Activated B cell treated with CpG ODN at 0.5 μM for 24 hours (primary cell): ENCODE measurements at regions of chr21 and their contacts with region 1.

Region 1: DNA sequence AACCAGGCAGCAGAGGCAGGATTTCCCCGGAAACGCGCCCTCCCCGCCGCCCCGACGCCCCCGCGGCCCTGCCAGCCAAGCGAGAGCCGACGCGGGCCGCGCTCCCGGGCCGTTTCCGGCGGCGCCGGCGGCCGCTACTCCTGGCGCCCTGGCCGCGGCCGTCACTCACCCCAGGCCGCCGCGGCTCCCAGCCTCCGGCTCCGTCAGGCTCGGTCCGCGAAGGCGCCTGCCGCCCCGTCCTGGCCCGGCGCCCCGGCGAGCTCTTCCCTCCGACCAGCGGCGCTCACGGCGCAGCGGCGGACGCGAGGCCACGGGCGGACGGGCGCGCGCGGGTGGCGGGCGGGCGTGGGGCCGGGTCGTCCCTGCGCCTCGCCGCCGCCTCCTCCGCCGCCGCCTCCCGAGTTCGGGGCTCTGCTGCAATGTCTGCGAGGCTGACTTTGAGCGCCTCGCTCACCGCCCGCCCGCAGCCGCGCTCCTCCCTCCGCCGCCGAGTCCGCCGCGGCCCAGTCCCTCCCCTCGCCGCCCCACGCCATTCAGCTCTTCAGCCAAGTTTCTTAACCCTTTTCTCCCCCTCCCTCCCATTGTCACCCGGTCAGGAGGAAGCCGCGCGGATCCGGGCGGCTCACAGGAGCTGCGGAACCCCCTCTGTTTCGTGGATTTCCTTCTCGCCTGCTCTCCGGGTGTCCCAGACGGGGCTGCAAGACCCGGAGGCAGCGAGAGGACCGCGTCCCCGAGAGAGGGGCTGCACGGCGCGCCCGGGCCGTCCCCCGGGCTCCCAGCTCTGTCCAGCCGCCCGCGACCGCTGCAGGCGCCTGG is at the start of gene NRIP1:
- DNase-seq: peak; percentile 84
- ATAC-seq: peak; percentile 84
- H3K4me3 Mint-ChIP-seq: peak within 1 kb of the TSS; percentile 98
- H3K27ac Mint-ChIP-seq: peak within 1 kb of the TSS; percentile 96
- H3K4me1 Mint-ChIP-seq: peaks cover 48% of the 10 kb centered on the region
- H3K27me3 Mint-ChIP-seq: no peaks in the 10 kb centered on the region
- CTCF ChIP-seq: no peak
- total RNA-seq, gene NRIP1: 24.6 and 26.6 TPM in 2 replicates

Region 2: GRCh38 chr21:14403681-14404318 is 661.0 kb before region 1 on chr21:
- CTCF ChIA-PET with region 1: no interaction called
- POLR2A ChIA-PET with region 1: no interaction called
- intact Hi-C with region 1: loop called (anchors 5 kb)
- DNase-seq: no peak
- ATAC-seq: peak; percentile 57
- H3K4me3 Mint-ChIP-seq: no peak overlapping the region
- H3K27ac Mint-ChIP-seq: no peak overlapping the region
- H3K4me1 Mint-ChIP-seq: no peaks in the 10 kb centered on the region
- H3K27me3 Mint-ChIP-seq: no peaks in the 10 kb centered on the region
- CTCF ChIP-seq: peak; percentile 77

Region 3: GRCh38 chr21:14762734-14763694 is 301.8 kb before region 1 on chr21:
- CTCF ChIA-PET with region 1: no interaction called
- POLR2A ChIA-PET with region 1: no interaction called
- intact Hi-C with region 1: loop called (anchors 2 kb)
- DNase-seq: no peak
- ATAC-seq: peak; percentile 95
- H3K4me3 Mint-ChIP-seq: no peak overlapping the region
- H3K27ac Mint-ChIP-seq: no peak overlapping the region
- H3K4me1 Mint-ChIP-seq: peaks cover 33% of the 10 kb centered on the region
- H3K27me3 Mint-ChIP-seq: no peaks in the 10 kb centered on the region
- CTCF ChIP-seq: no peak

Region 4: DNA sequence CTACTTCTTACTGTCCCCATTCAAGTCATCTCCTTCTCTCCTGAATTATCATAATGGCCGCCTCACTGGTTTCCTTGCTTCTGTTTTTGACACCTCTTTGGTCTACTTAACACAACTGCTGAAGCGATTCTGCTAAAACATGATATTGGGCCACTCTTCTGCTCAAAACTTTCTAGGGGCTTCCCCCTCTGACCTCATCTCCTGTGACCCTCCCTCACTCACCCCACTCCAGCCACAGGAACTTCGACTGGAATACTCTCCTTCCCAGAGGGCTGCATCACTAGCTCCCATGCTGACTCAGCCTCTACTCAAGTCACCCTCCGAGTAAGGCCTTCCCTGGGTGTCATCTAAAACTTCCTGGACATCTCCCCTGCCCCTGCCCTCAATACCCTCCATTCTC is 35.7 kb before region 1 on chr21:
- CTCF ChIA-PET with region 1: no interaction called
- POLR2A ChIA-PET with region 1: no interaction called
- intact Hi-C with region 1: loop called (anchors 5 kb)
- DNase-seq: no peak
- ATAC-seq: peak; percentile 77
- H3K4me3 Mint-ChIP-seq: no peak overlapping the region
- H3K27ac Mint-ChIP-seq: peak overlapping the region; percentile 33
- H3K4me1 Mint-ChIP-seq: peaks cover 35% of the 10 kb centered on the region
- H3K27me3 Mint-ChIP-seq: no peaks in the 10 kb centered on the region
- CTCF ChIP-seq: no peak

Region 5: DNA sequence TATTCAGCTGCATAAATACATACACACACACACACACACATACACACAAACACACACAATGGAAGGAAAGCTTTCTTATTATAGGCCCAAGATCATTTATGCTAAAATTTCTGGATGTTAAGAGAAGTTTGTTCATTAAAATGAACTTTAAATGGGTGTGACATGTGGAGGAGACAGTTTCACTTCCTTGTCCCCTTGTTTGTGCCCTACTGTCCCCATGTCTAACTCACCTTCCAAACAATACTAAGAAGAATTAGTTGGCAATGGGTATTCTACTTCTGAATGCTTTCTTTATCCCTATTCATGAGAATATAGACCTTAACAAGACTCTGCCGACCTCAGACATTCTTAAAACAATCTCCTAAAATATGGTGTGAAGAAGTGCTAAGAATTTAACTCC is 63.5 kb after region 1 on chr21:
- CTCF ChIA-PET with region 1: no interaction called
- POLR2A ChIA-PET with region 1: interaction called, 8 read pairs
- intact Hi-C with region 1: loop called (anchors 2 kb)
- DNase-seq: no peak
- ATAC-seq: peak; percentile 68
- H3K4me3 Mint-ChIP-seq: peak overlapping the region; percentile 50
- H3K27ac Mint-ChIP-seq: peak overlapping the region; percentile 48
- H3K4me1 Mint-ChIP-seq: peaks cover 20% of the 10 kb centered on the region
- H3K27me3 Mint-ChIP-seq: peaks cover under 1% of the 10 kb centered on the region
- CTCF ChIP-seq: no peak

Region 6: DNA sequence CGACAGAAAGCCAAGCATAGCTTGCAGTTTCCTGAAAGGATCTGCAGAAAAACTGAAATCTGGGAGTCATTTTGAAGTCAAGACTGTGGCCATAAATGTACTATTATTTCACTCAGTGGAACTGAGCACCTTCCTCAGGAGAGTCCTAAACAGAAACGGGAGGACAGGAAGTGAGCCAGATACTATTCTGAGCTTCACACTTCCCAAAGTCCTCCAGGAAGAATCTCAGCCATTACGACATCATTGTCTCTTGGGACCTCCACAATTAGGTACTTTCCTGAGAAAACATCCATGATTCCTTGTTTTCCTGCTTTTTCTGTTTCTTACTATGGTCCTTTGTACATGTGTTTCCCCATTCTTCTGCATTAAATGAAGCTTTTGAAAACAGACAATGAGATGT is 365.8 kb after region 1 on chr21:
- CTCF ChIA-PET with region 1: no interaction called
- POLR2A ChIA-PET with region 1: no interaction called
- intact Hi-C with region 1: no loop called
- DNase-seq: no peak
- ATAC-seq: no peak
- H3K4me3 Mint-ChIP-seq: no peak overlapping the region
- H3K27ac Mint-ChIP-seq: no peak overlapping the region
- H3K4me1 Mint-ChIP-seq: no peaks in the 10 kb centered on the region
- H3K27me3 Mint-ChIP-seq: no peaks in the 10 kb centered on the region
- CTCF ChIP-seq: no peak

Region 7: GRCh38 chr21:15483138-15483780 is 418.5 kb after region 1 on chr21:
- CTCF ChIA-PET with region 1: interaction called, 3 read pairs
- POLR2A ChIA-PET with region 1: interaction called, 3 read pairs
- intact Hi-C with region 1: loop called (anchors 1 kb)
- DNase-seq: peak; percentile 54
- ATAC-seq: peak; percentile 99
- H3K4me3 Mint-ChIP-seq: no peak overlapping the region
- H3K27ac Mint-ChIP-seq: no peak overlapping the region
- H3K4me1 Mint-ChIP-seq: peaks cover 7% of the 10 kb centered on the region
- H3K27me3 Mint-ChIP-seq: no peaks in the 10 kb centered on the region
- CTCF ChIP-seq: no peak

Region 8: GRCh38 chr21:15729674-15730483 is 665.1 kb after region 1 on chr21 and contains the start of gene USP25:
- CTCF ChIA-PET with region 1: no interaction called
- POLR2A ChIA-PET with region 1: interaction called, 3 read pairs
- intact Hi-C with region 1: loop called (anchors 1 kb)
- DNase-seq: peak; percentile 80
- ATAC-seq: peak; percentile 89
- H3K4me3 Mint-ChIP-seq: peak within 1 kb of the TSS; percentile 88
- H3K27ac Mint-ChIP-seq: peak within 1 kb of the TSS; percentile 88
- H3K4me1 Mint-ChIP-seq: peaks cover 39% of the 10 kb centered on the region
- H3K27me3 Mint-ChIP-seq: no peaks in the 10 kb centered on the region
- CTCF ChIP-seq: no peak
- total RNA-seq, gene USP25: 37.2 and 38.3 TPM in 2 replicates